GM10248 (cell line): ENCODE measurements at regions of chr3 and their contacts with region 1.

Region 1: GRCh38 chr3:31544634-31545033 is 11.9 kb downstream of the STT3B start:
- DNase-seq: no peak
- CTCF ChIP-seq: no peak

Region 2: GRCh38 chr3:31219131-31219843 is 325.3 kb before region 1 on chr3:
- CTCF ChIA-PET with region 1: no interaction called
- POLR2A ChIA-PET with region 1: no interaction called
- DNase-seq: peak; percentile 30
- CTCF ChIP-seq: no peak

Region 3: GRCh38 chr3:31531992-31532586 is 12.5 kb before region 1 on chr3:
- CTCF ChIA-PET with region 1: interaction called, 14 read pairs
- POLR2A ChIA-PET with region 1: interaction called, 12 read pairs
- DNase-seq: peak; percentile 98
- CTCF ChIP-seq: peak; percentile 0